GM12878 (cell line): ENCODE measurements at regions of chr6 and their contacts with region 1.

Region 1: GRCh38 chr6:33248925-33249731 is 22.5 kb downstream of the VPS52 start:
- DNase-seq: peak; percentile 99
- ATAC-seq: peak; percentile 95
- H3K4me3 ChIP-seq: peak overlapping the region; percentile 78
- H3K27ac ChIP-seq: peak overlapping the region; percentile 94
- H3K4me1 ChIP-seq: peaks cover 10% of the 10 kb centered on the region
- H3K27me3 ChIP-seq: no peaks in the 10 kb centered on the region
- CTCF ChIP-seq: peak in 2 of 3 experiments; percentile 7 to 28; a peak in 2 of 6 replicates
- EP300 ChIP-seq: 0 out of 4 replicates have a peak, but pooled peaks of 1 of the 2 experiments have one; percentile 23
- POLR2A ChIP-seq: peak; percentile 94
- RAD21 ChIP-seq: no peak

Region 2: GRCh38 chr6:33014841-33015634 is 234.1 kb before region 1 on chr6:
- CTCF ChIA-PET with region 1: interaction called, 10 read pairs
- POLR2A ChIA-PET with region 1: interaction called, 4 read pairs
- RAD21 ChIA-PET with region 1: interaction called, 24 read pairs
- SMC1A ChIA-PET with region 1: interaction called, 12 read pairs
- in situ Hi-C with region 1: no loop called
- intact Hi-C with region 1: no loop called
- DNase-seq: peak; percentile 75
- ATAC-seq: peak; percentile 81
- H3K4me3 ChIP-seq: no peak overlapping the region
- H3K27ac ChIP-seq: no peak overlapping the region
- H3K4me1 ChIP-seq: peaks cover 20% of the 10 kb centered on the region
- H3K27me3 ChIP-seq: no peaks in the 10 kb centered on the region
- CTCF ChIP-seq: peak; percentile 57 to 80 (median 68); a peak in 5 of 6 replicates
- EP300 ChIP-seq: no peak
- POLR2A ChIP-seq: no peak
- RAD21 ChIP-seq: peak; percentile 94

Region 3: DNA sequence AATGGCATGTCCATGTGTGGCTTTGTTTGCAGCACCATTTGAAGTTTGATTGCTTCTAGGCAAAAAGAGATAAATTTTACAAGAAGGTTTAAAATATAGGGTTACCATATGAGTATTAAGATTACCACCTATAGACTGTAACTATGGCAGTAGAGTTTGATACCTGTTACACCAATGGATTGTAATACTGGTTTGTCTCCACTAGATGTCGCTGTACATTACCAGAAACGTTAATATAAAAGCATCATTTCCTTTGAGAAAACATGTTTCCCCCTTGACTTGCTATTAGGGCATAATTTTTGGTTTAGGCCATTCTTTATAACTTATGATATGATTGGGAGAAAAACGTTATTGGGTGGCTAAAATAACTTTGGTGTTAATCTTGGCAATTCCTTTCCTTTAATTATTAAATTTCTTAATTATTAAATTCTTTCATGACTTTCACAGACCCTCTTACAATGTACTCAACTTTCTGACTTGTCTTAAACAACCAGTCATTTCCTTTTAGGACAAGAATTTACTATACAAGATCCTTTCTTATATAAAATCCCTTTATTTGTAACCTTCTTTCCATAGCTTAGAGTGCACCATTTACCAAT is 130.5 kb before region 1 on chr6:
- CTCF ChIA-PET with region 1: interaction called, 53 read pairs
- POLR2A ChIA-PET with region 1: interaction called, 3 read pairs
- RAD21 ChIA-PET with region 1: interaction called, 20 read pairs
- SMC1A ChIA-PET with region 1: interaction called, 34 read pairs
- in situ Hi-C with region 1: loop called (anchors 5 kb)
- intact Hi-C with region 1: loop called (anchors 1 kb)
- DNase-seq: no peak
- ATAC-seq: peak; percentile 45
- H3K4me3 ChIP-seq: no peak overlapping the region
- H3K27ac ChIP-seq: no peak overlapping the region
- H3K4me1 ChIP-seq: peaks cover 36% of the 10 kb centered on the region
- H3K27me3 ChIP-seq: peaks cover 0 to 2% of the 10 kb centered on the region in 2 experiments; a peak in 2 of 4 replicates
- CTCF ChIP-seq: peak; percentile 53 to 66 (median 61); a peak in 5 of 6 replicates
- EP300 ChIP-seq: no peak
- POLR2A ChIP-seq: no peak
- RAD21 ChIP-seq: peak; percentile 62

Region 4: GRCh38 chr6:33147807-33148666 is 101.1 kb before region 1 on chr6:
- CTCF ChIA-PET with region 1: interaction called, 15 read pairs
- POLR2A ChIA-PET with region 1: interaction called, 6 read pairs
- RAD21 ChIA-PET with region 1: interaction called, 14 read pairs
- SMC1A ChIA-PET with region 1: interaction called, 17 read pairs
- in situ Hi-C with region 1: no loop called
- intact Hi-C with region 1: no loop called
- DNase-seq: no peak
- ATAC-seq: no peak
- H3K4me3 ChIP-seq: no peak overlapping the region
- H3K27ac ChIP-seq: no peak overlapping the region
- H3K4me1 ChIP-seq: peaks cover 3% of the 10 kb centered on the region; the same call in 1 of the 2 replicates
- H3K27me3 ChIP-seq: peaks cover 0 to 2% of the 10 kb centered on the region in 2 experiments; a peak in 2 of 4 replicates
- CTCF ChIP-seq: peak; percentile 69 to 82 (median 81)
- EP300 ChIP-seq: no peak
- POLR2A ChIP-seq: no peak
- RAD21 ChIP-seq: peak; percentile 93

Region 5: GRCh38 chr6:33200219-33201146 is 48.6 kb before region 1 on chr6 and contains the starts of genes RXRB and SLC39A7:
- CTCF ChIA-PET with region 1: interaction called, 41 read pairs
- POLR2A ChIA-PET with region 1: interaction called, 4 read pairs
- RAD21 ChIA-PET with region 1: interaction called, 25 read pairs
- SMC1A ChIA-PET with region 1: interaction called, 8 read pairs
- in situ Hi-C with region 1: no loop called
- intact Hi-C with region 1: loop called (anchors 1 kb)
- DNase-seq: peak; percentile 99
- ATAC-seq: peak; percentile 77
- H3K4me3 ChIP-seq: peak within 1 kb of the TSS; percentile 95
- H3K27ac ChIP-seq: peak within 1 kb of the TSS; percentile 99
- H3K4me1 ChIP-seq: peaks cover 33% of the 10 kb centered on the region
- H3K27me3 ChIP-seq: no peaks in the 10 kb centered on the region
- CTCF ChIP-seq: no peak
- EP300 ChIP-seq: peak in 1 of 2 experiments; percentile 12; a peak in 1 of 4 replicates
- POLR2A ChIP-seq: peak; percentile 95
- RAD21 ChIP-seq: no peak
- polyA plus RNA-seq, gene RXRB: 0.71 to 1.6 TPM
- polyA plus RNA-seq, gene SLC39A7: 7.3 to 8.4 TPM

Region 6: DNA sequence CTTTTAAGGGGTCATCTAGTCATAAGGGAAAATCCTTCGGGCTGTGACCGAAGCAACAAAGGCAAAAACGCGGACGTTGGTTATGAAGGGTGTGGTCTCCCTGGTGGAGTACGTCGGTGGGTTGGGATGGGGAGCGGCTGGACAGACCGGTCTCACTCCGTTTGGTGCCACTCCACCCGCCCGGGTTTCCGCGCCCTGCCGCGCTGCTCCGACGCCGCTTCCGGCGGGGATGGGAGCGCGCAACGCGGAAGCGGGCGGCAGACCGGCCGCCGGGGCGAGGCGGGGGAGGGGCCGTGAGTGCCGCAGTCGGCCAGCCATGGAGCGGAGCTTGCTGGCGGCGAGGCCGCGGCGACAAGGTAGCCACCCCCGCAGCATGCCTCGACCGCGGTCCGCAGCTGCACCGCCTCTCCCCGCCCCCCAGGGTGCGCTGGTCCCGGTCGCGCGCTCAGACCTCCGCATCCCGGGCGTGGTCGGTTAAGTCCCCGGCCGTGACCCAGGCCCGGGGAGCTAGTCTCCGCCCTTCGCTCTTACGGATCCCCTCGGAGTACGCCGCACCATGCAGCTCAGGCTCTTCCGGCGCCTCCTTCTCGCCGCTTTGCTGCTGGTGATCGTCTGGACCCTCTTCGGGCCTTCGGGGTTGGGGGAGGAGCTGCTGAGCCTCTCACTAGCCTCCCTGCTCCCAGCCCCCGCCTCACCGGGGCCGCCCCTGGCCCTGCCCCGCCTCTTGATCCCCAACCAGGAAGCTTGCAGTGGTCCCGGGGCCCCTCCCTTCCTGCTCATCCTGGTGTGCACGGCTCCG is 27.9 kb after region 1 on chr6 and contains the start of gene B3GALT4:
- CTCF ChIA-PET with region 1: interaction called, 23 read pairs
- POLR2A ChIA-PET with region 1: interaction called, 40 read pairs
- RAD21 ChIA-PET with region 1: interaction called, 5 read pairs
- SMC1A ChIA-PET with region 1: interaction called, 6 read pairs
- in situ Hi-C with region 1: no loop called
- intact Hi-C with region 1: no loop called
- DNase-seq: peak; percentile 49
- ATAC-seq: peak; percentile 75
- H3K4me3 ChIP-seq: peak within 1 kb of the TSS; percentile 87
- H3K27ac ChIP-seq: peak within 1 kb of the TSS; percentile 86
- H3K4me1 ChIP-seq: peaks cover 22% of the 10 kb centered on the region
- H3K27me3 ChIP-seq: no peaks in the 10 kb centered on the region
- CTCF ChIP-seq: peak; percentile 34 to 60 (median 47); a peak in 4 of 6 replicates
- EP300 ChIP-seq: 0 out of 4 replicates have a peak, but pooled peaks of 1 of the 2 experiments have one; percentile 9
- POLR2A ChIP-seq: peak; percentile 92
- RAD21 ChIP-seq: no peak
- polyA plus RNA-seq, gene B3GALT4: 0.27 to 0.37 TPM

Region 7: DNA sequence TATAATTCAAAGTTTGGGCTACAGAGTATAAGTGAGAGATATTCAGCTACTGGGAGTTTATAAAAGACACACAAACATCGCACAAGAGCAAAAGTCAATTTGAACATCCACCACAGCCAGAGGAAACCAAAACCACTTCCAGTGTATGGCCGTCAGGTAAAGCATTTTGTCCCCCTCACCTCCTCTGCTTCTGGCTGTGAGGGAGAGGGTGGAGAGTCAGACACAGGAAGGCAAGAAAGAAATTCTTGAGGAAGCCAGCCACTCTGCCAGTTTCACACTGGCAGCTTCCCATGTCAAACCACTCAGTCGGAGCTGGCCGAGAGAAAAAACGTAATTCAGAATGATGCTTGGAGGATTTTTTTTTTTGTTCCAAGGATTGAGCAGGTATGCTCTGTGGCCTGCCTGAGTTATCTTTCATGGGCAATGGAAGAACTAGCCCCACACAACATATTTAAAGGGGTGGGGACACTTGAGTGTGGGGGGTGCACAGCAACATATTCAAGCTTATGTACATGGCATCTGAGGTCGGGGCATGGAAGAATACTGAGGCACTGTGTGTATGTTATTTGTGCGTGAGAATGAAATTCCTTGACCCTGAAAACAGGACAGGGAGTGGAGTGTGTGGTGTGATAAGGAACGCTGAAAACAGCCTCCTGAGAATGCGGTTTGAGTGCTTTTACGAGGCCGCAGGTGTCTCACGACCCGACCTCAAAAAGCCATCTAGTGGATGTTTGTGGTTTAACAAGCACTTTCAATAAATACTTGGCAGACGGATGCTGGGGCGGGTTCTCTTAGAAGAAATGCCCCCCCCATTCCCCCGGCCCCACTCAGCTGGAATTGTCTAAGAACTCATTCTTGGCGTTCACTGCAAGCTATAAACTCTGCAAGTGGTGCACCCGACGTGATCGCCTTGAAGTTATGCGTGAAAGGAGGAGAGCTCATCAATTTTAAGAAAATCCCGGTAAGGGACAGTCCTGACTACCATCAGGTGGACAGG is 95.9 kb after region 1 on chr6:
- CTCF ChIA-PET with region 1: interaction called, 8 read pairs
- POLR2A ChIA-PET with region 1: interaction called, 4 read pairs
- RAD21 ChIA-PET with region 1: interaction called, 14 read pairs
- SMC1A ChIA-PET with region 1: interaction called, 5 read pairs
- in situ Hi-C with region 1: no loop called
- intact Hi-C with region 1: no loop called
- DNase-seq: peak; percentile 58
- ATAC-seq: peak; percentile 81
- H3K4me3 ChIP-seq: peak overlapping the region; percentile 46; the same call in 1 of the 2 replicates
- H3K27ac ChIP-seq: peak overlapping the region; percentile 41
- H3K4me1 ChIP-seq: peaks cover 15% of the 10 kb centered on the region
- H3K27me3 ChIP-seq: no peaks in the 10 kb centered on the region
- CTCF ChIP-seq: peak; percentile 48 to 60 (median 55); a peak in 5 of 6 replicates
- EP300 ChIP-seq: no peak
- POLR2A ChIP-seq: no peak
- RAD21 ChIP-seq: peak; percentile 63

Region 8: DNA sequence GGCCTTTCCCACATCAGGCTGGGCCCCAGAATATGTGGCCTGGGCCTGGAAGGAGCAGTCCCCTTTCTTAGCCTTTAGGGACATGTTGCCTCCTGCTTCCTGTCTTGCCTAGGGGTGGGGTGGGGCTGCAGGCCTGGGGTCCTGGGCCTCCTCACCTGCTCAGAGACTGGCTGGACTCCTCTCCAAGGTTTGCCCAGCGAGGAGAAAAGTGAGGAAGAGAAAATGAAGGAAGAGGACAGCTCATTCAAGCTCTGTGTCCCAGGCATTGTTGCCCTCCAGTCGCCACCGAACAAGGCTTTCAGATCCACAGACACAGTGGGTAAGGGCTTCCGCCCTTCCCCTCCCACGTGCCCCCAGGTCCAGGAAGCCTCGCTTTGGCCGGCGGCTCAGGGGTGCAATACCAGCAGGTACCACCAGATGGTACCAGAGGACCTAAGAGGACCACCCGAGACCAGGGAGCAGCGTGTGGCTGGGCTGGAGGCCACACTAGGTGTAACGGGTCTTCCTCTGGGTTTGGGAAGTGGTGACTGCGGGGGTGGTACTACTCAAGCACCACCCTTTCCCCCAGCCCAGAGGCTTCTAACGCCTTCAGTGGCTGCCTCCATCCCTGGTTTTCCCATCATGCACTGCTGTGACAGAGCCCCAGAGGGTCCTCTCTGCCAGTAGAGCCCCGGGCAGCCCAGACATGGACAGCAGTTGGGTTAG is 336.4 kb after region 1 on chr6:
- CTCF ChIA-PET with region 1: no interaction called
- POLR2A ChIA-PET with region 1: no interaction called
- RAD21 ChIA-PET with region 1: no interaction called
- SMC1A ChIA-PET with region 1: no interaction called
- in situ Hi-C with region 1: no loop called
- intact Hi-C with region 1: no loop called
- DNase-seq: peak; percentile 70
- ATAC-seq: peak; percentile 82
- H3K4me3 ChIP-seq: no peak overlapping the region; the same call in 1 of the 2 replicates
- H3K27ac ChIP-seq: peak overlapping the region; percentile 1; the same call in 1 of the 2 replicates
- H3K4me1 ChIP-seq: peaks cover 23% of the 10 kb centered on the region
- H3K27me3 ChIP-seq: no peaks in the 10 kb centered on the region
- CTCF ChIP-seq: peak; percentile 87 to 95 (median 95)
- EP300 ChIP-seq: no peak
- POLR2A ChIP-seq: peak; percentile 48; the same call in 1 of the 2 replicates
- RAD21 ChIP-seq: peak; percentile 85